ENCODE measurements at regions of chr3 and their contacts with region 1.

Region 1: DNA sequence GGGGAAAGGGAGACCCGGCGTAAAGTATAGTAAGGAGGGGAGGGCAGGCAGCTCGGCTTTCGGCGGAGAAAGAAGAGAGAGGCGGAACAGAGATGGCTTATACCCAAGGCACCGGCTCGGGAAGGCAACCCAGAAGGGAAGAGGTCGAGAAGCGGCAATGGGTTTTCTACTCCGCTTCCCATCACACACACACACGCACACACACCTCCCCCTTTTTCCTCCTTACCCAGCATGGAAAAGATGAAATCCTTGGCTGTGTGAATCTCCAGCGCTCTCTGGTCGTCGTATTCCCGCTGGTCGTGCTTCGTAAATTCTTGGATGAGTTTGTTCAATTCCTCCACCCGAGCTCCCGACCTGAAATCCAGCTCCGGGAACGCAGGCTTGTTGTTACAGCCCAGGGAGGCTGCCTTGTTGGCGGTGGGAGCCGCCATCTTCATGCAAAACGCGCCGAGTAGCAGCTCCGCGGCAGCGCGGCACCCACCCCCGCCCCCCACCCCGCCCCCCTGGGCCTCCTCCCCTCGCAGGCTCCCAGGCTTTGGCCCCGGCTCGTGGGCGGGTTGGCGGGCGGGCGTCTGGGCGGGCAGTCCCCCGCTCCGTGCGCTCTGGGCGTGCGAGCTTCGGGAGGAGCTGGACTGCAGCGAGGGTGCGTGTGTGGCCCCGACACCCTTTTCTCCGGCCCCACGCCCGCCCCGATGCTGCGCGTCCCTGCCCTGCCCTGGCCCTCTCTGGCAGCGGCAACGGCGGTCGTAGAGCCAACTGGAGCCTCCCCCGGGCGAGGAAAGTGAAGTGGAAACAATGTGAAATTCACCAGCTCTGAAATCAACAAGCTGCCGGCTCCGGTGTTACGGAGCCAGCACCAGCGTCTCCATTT is at the start of gene MB21D2:
- DNase-seq: peak; percentile 88 to 92
- ATAC-seq: peak; percentile 91
- H3K4me3 ChIP-seq: peak within 1 kb of the TSS; percentile 55 to 91
- H3K27ac ChIP-seq: peak within 1 kb of the TSS in 1 of 2 donors; percentile 93
- H3K4me1 ChIP-seq: peaks cover 4 to 9% of the 10 kb centered on the region in 2 donors
- H3K27me3 ChIP-seq: no peaks in the 10 kb centered on the region
- total RNA-seq, gene MB21D2: 3.9 to 4.5 TPM

Region 2: DNA sequence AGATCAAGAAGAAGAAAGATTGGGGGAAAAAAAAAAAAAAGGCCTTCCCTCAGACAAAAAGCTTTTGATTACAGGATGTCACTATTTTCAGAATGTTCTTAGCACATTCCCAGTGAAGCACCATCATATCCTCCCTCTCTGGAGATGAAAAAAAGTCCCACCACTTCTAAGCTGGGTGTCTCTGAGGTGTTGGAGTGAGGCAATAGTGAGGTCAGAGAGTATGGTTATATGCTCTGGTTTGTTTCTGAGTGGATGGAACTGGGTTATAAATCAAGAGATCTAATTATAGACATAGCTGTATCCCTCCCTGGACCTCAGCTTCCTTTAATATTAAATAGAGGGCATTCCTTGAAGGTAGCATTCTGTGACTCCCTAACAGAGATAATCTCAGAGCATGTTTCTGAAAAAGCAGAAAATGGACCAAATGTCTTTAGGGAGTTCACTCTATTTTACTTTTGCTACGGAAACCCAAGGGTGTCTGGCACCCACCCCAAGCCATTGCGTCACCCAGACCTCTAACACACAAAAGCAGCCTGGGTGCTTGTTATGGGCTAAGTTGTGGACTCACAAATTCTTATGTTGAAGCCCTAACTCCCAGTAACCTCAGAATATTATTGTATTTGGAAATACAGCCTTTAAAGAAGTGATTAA is 81.7 kb before region 1 on chr3:
- intact Hi-C with region 1: loop called in 1 of 2 experiments (anchors 5 kb)
- DNase-seq: no peak
- ATAC-seq: no peak
- H3K4me3 ChIP-seq: no peak overlapping the region
- H3K27ac ChIP-seq: no peak overlapping the region
- H3K4me1 ChIP-seq: peaks cover 4 to 8% of the 10 kb centered on the region in 2 donors
- H3K27me3 ChIP-seq: no peaks in the 10 kb centered on the region

Measured in aorta (tissue), 5 donors.